ENCODE measurements at regions of chr12 and their contacts with region 1.

Region 1: DNA sequence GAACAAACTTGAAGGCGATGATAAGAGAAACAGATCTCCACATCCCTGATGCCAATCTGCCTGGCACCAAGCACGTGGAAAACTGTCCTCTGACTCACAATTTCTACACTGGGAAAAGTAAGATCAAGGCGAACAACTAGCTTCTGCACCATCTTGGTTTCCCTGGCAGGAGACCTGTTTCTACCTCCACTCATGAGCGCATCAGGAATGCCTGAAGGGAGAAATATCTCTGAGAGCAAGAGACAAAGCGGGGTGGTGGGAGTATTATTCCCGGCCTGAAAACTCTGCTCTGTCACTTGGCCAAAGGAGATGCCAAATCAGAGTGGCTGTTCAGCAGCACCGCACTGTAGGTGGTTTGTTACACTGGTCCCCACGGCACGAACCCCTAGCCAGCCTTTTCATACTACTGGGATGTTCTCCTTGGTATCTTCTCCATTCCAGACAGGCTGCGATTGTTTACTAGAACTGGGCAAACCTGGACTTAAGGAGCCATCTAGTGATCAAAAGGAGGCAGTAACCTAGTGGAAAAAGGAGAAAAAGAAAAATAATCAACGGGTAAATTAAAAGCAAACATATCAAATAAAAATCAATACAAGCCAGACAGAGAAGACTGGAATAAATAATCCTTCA is 59.0 kb upstream of the TMTC2 start:
- DNase-seq: peak in 1 of 10 donors; percentile 59

Region 2: GRCh38 chr12:82383930-82384552 is 243.6 kb before region 1 on chr12:
- intact Hi-C with region 1: loop called (anchors 5 kb)
- DNase-seq: no peak

Region 3: GRCh38 chr12:82415402-82415801 is 212.3 kb before region 1 on chr12:
- intact Hi-C with region 1: no loop called
- DNase-seq: no peak

Measured in posterior cingulate gyrus (tissue), 11 donors.